ENCODE measurements at regions of chr6 and their contacts with region 1.

Region 1: GRCh38 chr6:168150551-168151320 is 71.7 kb upstream of the FRMD1 start:
- DNase-seq: peak; percentile 34
- H3K4me3 Mint-ChIP-seq: no peak overlapping the region
- H3K27ac Mint-ChIP-seq: no peak overlapping the region
- H3K4me1 Mint-ChIP-seq: peaks cover 6% of the 10 kb centered on the region
- H3K27me3 Mint-ChIP-seq: peaks cover 79% of the 10 kb centered on the region
- CTCF ChIP-seq: peak; percentile 38

Region 2: GRCh38 chr6:168133168-168133561 is 17.6 kb before region 1 on chr6:
- CTCF ChIA-PET with region 1: no interaction called
- intact Hi-C with region 1: no loop called
- DNase-seq: no peak
- H3K4me3 Mint-ChIP-seq: no peak overlapping the region
- H3K27ac Mint-ChIP-seq: no peak overlapping the region
- H3K4me1 Mint-ChIP-seq: no peaks in the 10 kb centered on the region
- H3K27me3 Mint-ChIP-seq: peaks cover 81% of the 10 kb centered on the region
- CTCF ChIP-seq: no peak

Region 3: DNA sequence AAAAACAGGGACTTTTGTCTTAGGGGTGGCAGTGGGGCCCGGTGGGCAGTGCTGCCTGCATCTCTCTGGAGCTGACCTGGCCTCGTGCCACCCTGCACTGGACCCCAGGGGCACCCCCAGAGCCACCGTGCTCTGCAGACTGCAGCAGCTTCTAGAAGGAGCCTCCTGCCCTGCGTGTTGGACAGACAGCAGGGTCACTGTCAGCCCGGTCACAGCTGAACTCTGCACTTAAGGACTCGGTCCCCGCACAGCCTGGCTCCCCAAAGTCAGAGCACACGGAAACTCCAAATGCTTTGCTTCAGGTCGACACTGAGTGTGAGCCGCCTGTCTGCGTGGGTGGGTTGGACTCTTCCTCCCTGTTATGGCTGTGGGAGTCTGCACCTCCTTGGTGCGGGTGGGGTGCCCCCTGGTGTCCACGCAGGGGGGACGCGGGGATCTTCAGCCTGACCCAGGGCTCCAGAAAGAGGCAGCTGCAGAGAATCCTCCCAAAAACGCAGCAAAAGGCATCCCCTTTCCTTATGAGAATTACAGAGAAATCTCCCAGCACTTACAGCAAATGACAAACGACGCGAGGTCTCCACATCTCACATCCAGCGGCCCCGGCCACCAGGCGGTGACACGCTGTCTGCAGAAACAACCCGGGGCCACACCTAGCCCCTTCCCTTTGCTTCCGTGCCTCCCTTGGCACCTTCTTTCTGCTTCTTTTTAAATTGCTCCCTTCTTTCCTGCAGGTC is 205.1 kb after region 1 on chr6:
- CTCF ChIA-PET with region 1: no interaction called
- intact Hi-C with region 1: loop called (anchors 2 kb)
- DNase-seq: peak; percentile 77
- H3K4me3 Mint-ChIP-seq: no peak overlapping the region
- H3K27ac Mint-ChIP-seq: no peak overlapping the region
- H3K4me1 Mint-ChIP-seq: no peaks in the 10 kb centered on the region
- H3K27me3 Mint-ChIP-seq: peaks cover 42% of the 10 kb centered on the region
- CTCF ChIP-seq: peak; percentile 89

Measured in Calu3 (cell line).